Gastrocnemius medialis (tissue), 4 donors: ENCODE measurements at regions of chr12 and their contacts with region 1.

Region 1: GRCh38 chr12:15276088-15276698 is 46.1 kb upstream of the PTPRO start:
- DNase-seq: no peak
- ATAC-seq: peak; percentile 51 to 57
- H3K4me3 ChIP-seq: no peak overlapping the region
- H3K27ac ChIP-seq: no peak overlapping the region
- H3K4me1 ChIP-seq: peaks cover 12 to 34% of the 10 kb centered on the region in 2 donors
- H3K27me3 ChIP-seq: no peaks in the 10 kb centered on the region
- CTCF ChIP-seq: peak; percentile 40 to 73 (median 67)
- POLR2A ChIP-seq: no peak

Region 2: GRCh38 chr12:14913381-14913781 is 362.8 kb before region 1 on chr12:
- in situ Hi-C with region 1: no loop called
- intact Hi-C with region 1: no loop called
- DNase-seq: no peak
- ATAC-seq: no peak
- H3K4me3 ChIP-seq: no peak overlapping the region
- H3K27ac ChIP-seq: no peak overlapping the region
- H3K4me1 ChIP-seq: no peaks in the 10 kb centered on the region
- H3K27me3 ChIP-seq: no peaks in the 10 kb centered on the region
- CTCF ChIP-seq: no peak
- POLR2A ChIP-seq: no peak

Region 3: GRCh38 chr12:15001733-15002382 is 274.3 kb before region 1 on chr12:
- in situ Hi-C with region 1: no loop called
- intact Hi-C with region 1: loop called (anchors 5 kb)
- DNase-seq: peak; percentile 12 to 21
- ATAC-seq: peak; percentile 85 to 86
- H3K4me3 ChIP-seq: peak overlapping the region; percentile 19 to 26 (median 21)
- H3K27ac ChIP-seq: peak overlapping the region; percentile 58 to 68 (median 64)
- H3K4me1 ChIP-seq: peaks cover 24% of the 10 kb centered on the region in 2 donors
- H3K27me3 ChIP-seq: no peaks in the 10 kb centered on the region
- CTCF ChIP-seq: no peak
- POLR2A ChIP-seq: no peak

Region 4: DNA sequence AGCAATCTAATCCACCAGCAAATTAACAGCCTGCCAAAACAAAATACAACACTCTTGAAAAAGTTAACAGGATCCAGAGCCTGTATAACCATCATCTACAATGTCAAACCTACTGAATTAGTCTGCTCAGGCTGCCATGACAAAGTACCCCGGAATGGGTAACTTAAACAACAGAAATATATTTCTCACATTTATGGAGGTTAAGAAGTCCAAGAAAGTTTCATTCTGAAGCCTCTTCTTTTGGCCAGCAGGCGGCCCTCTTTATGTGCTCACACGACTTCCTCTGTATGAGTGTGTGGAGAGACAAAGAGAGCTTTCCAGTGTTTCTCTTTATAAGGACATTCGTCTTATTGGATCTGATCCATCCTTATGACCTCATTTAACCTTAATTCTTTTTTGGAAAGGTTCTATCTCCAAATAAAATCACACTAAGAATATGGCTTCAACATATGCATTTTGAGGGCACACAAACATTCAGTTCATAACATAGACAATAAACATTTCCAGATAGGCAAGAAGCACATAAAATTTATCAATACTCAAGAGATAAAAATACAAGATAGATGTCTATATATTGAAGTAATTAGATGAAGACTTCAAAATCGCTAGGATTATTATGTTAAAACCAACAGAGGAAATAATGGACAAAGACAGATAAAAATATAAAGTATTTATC is 49.1 kb before region 1 on chr12:
- in situ Hi-C with region 1: loop called in 2 of 4 experiments (anchors 5 kb)
- intact Hi-C with region 1: no loop called
- DNase-seq: peak; percentile 15 to 32
- ATAC-seq: no peak
- H3K4me3 ChIP-seq: no peak overlapping the region
- H3K27ac ChIP-seq: no peak overlapping the region
- H3K4me1 ChIP-seq: peaks cover 0 to 6% of the 10 kb centered on the region in 2 donors
- H3K27me3 ChIP-seq: no peaks in the 10 kb centered on the region
- CTCF ChIP-seq: peak; percentile 36 to 60 (median 44)
- POLR2A ChIP-seq: no peak

Region 5: DNA sequence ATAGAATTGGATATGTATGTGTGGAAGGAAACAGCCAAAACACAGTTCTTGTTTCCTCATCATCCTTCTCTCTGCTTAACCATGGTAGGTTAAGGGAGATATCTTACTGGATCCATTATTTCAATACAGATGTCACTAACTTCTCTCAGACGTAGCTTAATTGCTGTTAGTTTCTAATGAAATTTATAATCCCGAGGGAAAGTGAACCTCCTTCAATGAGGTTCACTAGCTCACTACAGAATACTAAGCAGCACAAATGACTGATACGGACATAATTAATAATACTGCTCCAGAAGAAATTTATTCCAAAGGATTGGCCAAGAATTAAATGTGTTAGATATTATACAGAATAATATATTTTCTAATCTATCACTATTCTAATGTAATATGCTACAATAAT is 17.5 kb after region 1 on chr12:
- in situ Hi-C with region 1: no loop called
- intact Hi-C with region 1: no loop called
- DNase-seq: no peak
- ATAC-seq: no peak
- H3K4me3 ChIP-seq: no peak overlapping the region
- H3K27ac ChIP-seq: no peak overlapping the region
- H3K4me1 ChIP-seq: no peaks in the 10 kb centered on the region
- H3K27me3 ChIP-seq: no peaks in the 10 kb centered on the region
- CTCF ChIP-seq: no peak
- POLR2A ChIP-seq: no peak

Region 6: DNA sequence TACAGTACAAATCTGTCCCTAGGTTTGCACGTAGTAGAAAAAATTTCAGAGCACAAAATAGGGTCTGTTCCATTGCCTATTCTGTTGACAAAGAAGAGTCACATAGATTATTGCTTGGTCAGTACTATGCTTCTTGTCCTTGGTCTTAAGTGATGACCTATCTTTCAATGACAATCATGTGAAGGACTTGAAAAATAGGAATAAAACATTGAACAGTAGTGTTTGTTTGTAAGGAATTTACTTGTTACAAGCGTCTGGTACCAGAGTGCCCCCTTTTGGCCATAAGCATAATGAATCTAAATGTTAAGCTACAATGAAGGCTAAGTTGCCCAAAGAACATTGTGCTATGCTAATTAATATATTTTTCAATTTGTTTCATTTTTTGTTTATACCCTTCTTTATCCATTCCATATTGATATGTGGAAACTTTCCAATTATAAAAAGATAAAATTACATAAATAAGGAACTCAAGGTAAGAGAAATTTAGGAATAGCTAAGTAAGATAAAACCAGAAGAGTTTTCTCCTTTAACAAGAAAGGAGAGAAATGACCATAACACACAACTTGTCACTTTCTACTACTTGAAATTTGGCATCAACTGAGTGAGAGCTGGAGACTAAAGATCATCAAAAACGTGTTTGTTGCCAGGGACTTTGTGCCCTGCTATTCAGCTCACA is 308.3 kb after region 1 on chr12:
- in situ Hi-C with region 1: loop called in 2 of 4 experiments (anchors 10 kb)
- intact Hi-C with region 1: loop called (anchors 5 kb)
- DNase-seq: no peak
- ATAC-seq: no peak
- H3K4me3 ChIP-seq: no peak overlapping the region
- H3K27ac ChIP-seq: no peak overlapping the region
- H3K4me1 ChIP-seq: no peaks in the 10 kb centered on the region
- H3K27me3 ChIP-seq: no peaks in the 10 kb centered on the region
- CTCF ChIP-seq: peak; percentile 30 to 60 (median 48)
- POLR2A ChIP-seq: no peak

Region 7: DNA sequence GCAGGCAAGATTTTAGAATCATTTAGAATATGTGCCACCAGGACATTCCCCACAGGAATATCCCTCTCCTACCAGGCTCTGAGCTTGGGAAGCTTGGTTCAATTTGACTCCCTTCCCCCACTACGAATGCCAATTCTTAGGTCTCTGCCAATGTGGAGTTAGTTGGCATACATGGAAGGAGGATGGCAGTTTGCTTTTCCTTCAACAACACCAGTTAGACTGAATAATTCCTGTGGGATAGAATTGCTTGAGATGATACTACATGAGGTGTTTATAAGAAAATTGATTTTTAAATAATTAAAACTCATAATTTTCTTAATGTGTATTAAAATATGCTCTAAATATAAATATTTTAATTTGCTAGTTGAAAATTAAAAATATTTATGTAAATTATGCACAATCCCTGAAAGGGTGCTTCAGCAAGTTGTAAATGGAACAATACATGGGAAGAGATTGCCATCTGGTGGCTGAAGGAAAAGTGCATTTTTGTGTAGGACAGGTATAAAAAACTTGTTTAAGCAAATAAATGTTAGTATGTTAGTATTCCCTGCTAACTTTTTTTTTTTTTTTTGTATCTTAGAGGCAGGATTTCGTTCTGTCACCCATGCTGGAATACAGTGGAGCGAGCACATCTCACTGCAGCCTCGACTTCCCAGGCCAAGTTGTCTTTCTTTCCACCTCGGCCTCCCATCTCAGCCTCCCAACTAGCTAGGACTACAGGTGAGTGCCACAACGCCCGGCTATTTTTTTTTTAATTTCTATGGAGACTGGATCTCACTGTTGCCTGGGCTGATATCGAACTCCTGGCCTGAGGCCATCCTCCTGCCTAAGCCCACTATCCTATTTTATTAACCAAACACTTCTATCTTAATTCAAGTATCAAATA is 580.1 kb after region 1 on chr12:
- in situ Hi-C with region 1: loop called in 3 of 4 experiments (anchors 10 to 25 kb)
- intact Hi-C with region 1: loop called (anchors 2 kb)
- DNase-seq: peak in 1 of 2 donors; percentile 15
- ATAC-seq: peak; percentile 45 to 64
- H3K4me3 ChIP-seq: no peak overlapping the region
- H3K27ac ChIP-seq: peak overlapping the region in 3 of 4 donors; percentile 8 to 19 (median 15)
- H3K4me1 ChIP-seq: peaks cover 0 to 2% of the 10 kb centered on the region in 2 donors
- H3K27me3 ChIP-seq: no peaks in the 10 kb centered on the region
- CTCF ChIP-seq: peak; percentile 78 to 86 (median 82)
- POLR2A ChIP-seq: no peak